OCI-LY7 (cell line): ENCODE measurements at regions of chr17 and their contacts with region 1.

Region 1: GRCh38 chr17:75109407-75110233 is at the start of gene ARMC7:
- DNase-seq: peak; percentile 96
- H3K4me3 ChIP-seq: peak within 1 kb of the TSS; percentile 72
- H3K27ac ChIP-seq: no peak within 1 kb of the TSS
- H3K4me1 ChIP-seq: peaks cover 29% of the 10 kb centered on the region
- CTCF ChIP-seq: no peak
- total RNA-seq, gene ARMC7: 6.8 and 7.1 TPM in 2 replicates

Region 2: GRCh38 chr17:75012346-75013091 is 97.1 kb before region 1 on chr17 and contains the start of gene MRPL58:
- CTCF ChIA-PET with region 1: interaction called, 3 read pairs
- POLR2A ChIA-PET with region 1: interaction called, 10 read pairs
- intact Hi-C with region 1: loop called (anchors 5 kb)
- DNase-seq: peak; percentile 94
- H3K4me3 ChIP-seq: peak within 1 kb of the TSS; percentile 73
- H3K27ac ChIP-seq: peak within 1 kb of the TSS; percentile 54
- H3K4me1 ChIP-seq: peaks cover 16% of the 10 kb centered on the region
- CTCF ChIP-seq: peak; percentile 63
- total RNA-seq, gene MRPL58: 79.8 and 84.2 TPM in 2 replicates

Region 3: GRCh38 chr17:75154195-75155106 is 44.8 kb after region 1 on chr17 and contains the start of gene JPT1:
- CTCF ChIA-PET with region 1: no interaction called
- POLR2A ChIA-PET with region 1: no interaction called
- intact Hi-C with region 1: loop called (anchors 2 kb)
- DNase-seq: peak; percentile 100
- H3K4me3 ChIP-seq: peak within 1 kb of the TSS; percentile 75
- H3K27ac ChIP-seq: peak within 1 kb of the TSS; percentile 78
- H3K4me1 ChIP-seq: peaks cover 24% of the 10 kb centered on the region
- CTCF ChIP-seq: no peak
- total RNA-seq, gene JPT1: 121 and 140 TPM in 2 replicates

Region 4: GRCh38 chr17:75199886-75200618 is 90.4 kb after region 1 on chr17:
- CTCF ChIA-PET with region 1: interaction called, 5 read pairs
- POLR2A ChIA-PET with region 1: interaction called, 16 read pairs
- intact Hi-C with region 1: loop called (anchors 1 kb)
- DNase-seq: no peak
- H3K4me3 ChIP-seq: no peak overlapping the region
- H3K27ac ChIP-seq: no peak overlapping the region
- H3K4me1 ChIP-seq: peaks cover 6% of the 10 kb centered on the region
- CTCF ChIP-seq: no peak

Region 5: GRCh38 chr17:75238684-75239191 is 129.1 kb after region 1 on chr17:
- CTCF ChIA-PET with region 1: no interaction called
- POLR2A ChIA-PET with region 1: no interaction called
- intact Hi-C with region 1: loop called (anchors 1 kb)
- DNase-seq: peak; percentile 89
- H3K4me3 ChIP-seq: no peak overlapping the region
- H3K27ac ChIP-seq: peak overlapping the region; percentile 15
- H3K4me1 ChIP-seq: peaks cover 27% of the 10 kb centered on the region
- CTCF ChIP-seq: peak; percentile 99